Right ventricle myocardium superior (tissue), 1 donor: ENCODE measurements at regions of chr4 and their contacts with region 1.

Region 1: DNA sequence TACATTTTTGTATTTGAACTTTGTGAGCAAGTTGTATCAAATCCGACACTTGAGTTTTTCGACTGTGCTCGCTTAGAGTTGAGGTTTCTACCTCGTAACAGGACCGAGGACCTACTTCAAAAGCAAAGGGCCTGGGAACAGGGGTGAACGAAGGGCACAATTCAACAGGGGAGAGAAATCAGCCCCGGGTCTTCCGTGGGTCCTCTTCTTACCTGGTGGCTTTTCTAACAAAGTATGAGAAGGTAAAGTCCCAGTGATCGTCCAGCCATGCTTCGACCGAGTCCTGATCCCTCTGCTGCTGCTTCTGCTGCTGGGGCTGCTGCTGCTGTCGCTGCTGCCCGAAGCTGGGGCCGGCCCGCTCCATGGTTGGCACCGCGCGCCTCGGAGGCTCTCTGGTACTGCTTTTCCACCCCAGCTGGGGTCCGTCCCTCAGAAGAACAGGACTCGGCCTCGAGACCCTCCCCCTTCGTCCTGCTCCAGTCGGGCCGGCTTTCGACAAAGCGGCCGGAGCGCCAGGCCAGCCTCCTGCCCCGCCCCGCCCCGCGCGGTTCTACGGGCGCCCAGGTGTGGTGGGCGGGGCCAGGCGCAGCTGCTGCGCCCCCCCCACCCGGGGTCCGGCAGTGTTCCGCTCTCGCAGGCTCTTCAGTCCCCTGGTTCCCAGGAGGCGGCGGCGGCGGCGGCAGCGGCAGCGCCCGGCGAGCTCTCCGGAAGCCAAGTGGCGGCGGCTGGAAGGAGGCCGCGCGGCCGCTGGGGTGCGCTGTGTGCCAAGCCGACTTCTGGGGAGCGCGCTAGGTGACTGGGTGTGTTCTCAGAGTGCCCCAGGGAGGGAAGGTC is at the start of gene PDE5A:
- DNase-seq: peak; percentile 84
- ATAC-seq: peak; percentile 94
- total RNA-seq, gene PDE5A: 6.5 TPM

Region 2: GRCh38 chr4:119300101-119300978 is 328.2 kb before region 1 on chr4:
- intact Hi-C with region 1: loop called (anchors 10 kb)
- DNase-seq: peak; percentile 98
- ATAC-seq: peak; percentile 97

Region 3: DNA sequence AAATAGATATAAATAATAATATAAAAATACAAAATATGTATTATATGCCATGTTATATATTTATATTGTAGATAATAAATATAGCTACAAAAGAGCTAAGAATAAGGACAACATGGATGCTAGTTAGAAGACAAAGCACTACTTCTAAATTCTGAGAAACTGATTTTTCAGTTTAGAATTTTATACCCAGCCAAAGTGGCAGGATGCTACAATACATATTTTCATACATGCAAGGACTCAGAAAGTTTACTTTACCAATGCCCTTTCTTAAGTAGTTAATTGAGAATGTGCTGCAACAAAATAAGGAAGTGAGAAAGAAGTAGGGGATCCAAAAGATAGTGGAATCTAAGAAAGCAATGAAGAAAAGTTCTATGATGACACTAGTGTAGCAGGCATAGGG is 64.4 kb before region 1 on chr4:
- intact Hi-C with region 1: loop called (anchors 10 kb)
- DNase-seq: no peak
- ATAC-seq: no peak

Region 4: DNA sequence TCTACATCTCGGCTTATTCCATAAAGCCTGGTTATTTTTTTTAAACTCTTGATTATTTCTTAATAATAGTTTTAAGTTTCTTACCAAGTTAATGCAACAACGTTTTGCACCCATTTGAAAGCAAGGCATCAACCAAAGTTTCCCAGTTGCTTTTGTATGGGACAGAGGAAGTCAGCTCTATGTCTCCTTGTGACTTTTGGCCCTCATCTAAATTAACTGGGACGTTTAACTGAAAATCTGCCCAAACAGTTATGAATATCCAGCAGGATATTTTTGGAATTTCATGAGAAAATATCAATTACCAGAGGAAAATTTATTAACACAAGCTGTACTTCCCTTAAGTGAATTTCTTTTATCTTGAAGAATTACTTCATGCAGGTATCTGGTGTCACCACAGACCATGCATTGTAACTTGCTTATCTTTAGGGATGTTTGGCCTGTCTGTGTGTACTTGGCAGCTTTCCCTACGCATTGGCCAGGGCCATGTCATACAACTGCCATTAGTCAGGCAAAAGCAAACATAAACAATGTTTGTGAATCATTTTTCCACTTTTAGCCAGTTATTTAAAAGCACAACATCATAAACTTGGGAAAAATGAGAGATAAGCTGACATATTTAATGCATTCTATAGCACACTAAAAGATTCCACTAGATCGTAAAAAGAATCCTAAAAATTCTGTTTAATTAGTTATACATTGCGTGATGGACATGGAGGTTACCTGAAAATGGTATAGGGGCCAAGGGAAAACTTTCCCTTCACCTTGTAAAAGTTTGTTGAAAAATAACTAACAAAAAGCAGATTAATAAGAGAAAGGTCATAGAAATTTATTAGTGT is 101.5 kb after region 1 on chr4:
- intact Hi-C with region 1: loop called (anchors 10 kb)
- DNase-seq: no peak
- ATAC-seq: peak; percentile 84

Region 5: GRCh38 chr4:120049732-120050494 is 421.4 kb after region 1 on chr4:
- intact Hi-C with region 1: loop called (anchors 5 kb)
- DNase-seq: peak; percentile 64
- ATAC-seq: peak; percentile 96